ENCODE measurements at regions of chr9 and their contacts with region 1.

Region 1: DNA sequence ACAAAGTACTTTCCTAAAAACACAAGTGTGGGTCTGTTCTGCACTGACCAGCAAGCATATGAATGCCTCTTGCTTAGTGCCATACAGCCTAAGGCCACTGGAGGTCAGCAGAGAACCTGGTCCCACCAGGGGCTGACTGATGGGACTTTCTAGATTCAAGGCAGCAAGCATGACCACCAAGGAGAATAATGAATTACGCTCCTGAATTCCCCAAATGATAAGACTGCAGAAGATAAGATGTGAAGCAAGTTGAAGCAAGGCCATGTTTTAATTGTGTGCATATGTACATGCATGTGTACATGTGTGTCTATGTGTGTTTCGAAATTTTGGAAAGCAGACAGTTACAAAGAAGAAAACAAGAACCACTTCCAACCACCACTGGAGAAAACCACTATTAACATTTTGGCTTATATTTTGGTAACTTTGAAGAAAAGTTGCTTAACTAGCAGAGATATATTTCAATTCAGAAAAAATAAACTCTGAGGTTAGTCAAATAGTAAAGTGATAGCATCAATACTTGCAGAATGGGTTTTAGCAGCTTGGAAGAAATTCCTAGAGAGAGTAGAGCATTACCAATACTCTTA is 70.5 kb downstream of the ERP44 start:
- DNase-seq: peak; percentile 0
- H3K4me3 ChIP-seq: no peak overlapping the region
- H3K27ac ChIP-seq: no peak overlapping the region
- H3K4me1 ChIP-seq: no peaks in the 10 kb centered on the region
- H3K27me3 ChIP-seq: no peaks in the 10 kb centered on the region
- CTCF ChIP-seq: peak; percentile 50 to 87 (median 78)
- POLR2A ChIP-seq: no peak

Region 2: DNA sequence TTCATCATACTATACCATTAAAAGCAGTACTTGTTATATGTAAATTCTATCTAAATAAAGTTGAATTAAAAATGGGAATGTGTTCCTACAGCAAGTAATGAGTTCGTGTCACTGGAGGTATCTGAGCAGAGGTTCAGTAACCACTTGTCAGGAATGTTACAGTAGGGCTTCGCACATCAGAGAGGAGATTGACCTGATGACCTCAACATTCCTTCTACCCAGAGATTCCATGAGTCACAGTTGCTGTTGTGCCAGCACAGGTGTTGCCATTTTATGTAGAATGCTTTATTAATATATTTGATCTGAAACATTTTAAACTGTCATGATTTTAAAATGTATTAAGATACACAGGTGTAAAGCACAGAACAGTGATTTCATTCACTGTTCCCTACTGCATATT is 61.6 kb before region 1 on chr9:
- intact Hi-C with region 1: no loop called
- DNase-seq: no peak
- H3K4me3 ChIP-seq: no peak overlapping the region
- H3K27ac ChIP-seq: no peak overlapping the region
- H3K4me1 ChIP-seq: no peaks in the 10 kb centered on the region
- H3K27me3 ChIP-seq: no peaks in the 10 kb centered on the region
- CTCF ChIP-seq: no peak
- POLR2A ChIP-seq: no peak

Region 3: DNA sequence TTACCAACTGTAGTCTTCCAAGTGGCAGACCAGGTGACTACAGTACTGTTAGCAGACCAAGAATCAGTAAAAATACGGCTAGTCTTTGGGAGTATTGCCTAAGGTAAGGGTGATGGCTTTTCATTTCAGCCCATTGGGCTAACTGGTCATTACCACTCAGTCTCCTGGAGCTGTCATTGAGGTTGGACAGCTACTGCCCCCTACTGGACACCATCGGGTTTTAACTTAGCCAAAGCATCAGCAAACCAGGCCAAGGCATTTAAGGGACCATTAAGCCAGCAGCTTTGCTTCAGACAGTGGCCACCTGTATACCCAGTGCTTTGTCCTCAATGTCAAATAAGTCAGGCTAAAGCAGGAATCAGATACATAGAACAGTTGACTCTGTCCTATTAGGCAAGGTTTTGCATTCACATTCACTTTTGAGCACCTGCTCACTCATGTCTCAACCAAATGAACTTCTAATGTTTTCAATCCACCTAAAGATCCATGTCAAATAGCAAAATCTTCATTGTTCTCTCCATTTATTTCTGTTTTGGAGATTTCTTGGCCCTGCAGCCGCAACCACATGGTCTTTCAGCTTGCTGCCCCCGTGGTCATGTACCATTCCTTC is 188.0 kb after region 1 on chr9:
- intact Hi-C with region 1: loop called (anchors 5 kb)
- DNase-seq: no peak
- H3K4me3 ChIP-seq: no peak overlapping the region
- H3K27ac ChIP-seq: no peak overlapping the region
- H3K4me1 ChIP-seq: no peaks in the 10 kb centered on the region
- H3K27me3 ChIP-seq: no peaks in the 10 kb centered on the region
- CTCF ChIP-seq: peak; percentile 24 to 72 (median 56)
- POLR2A ChIP-seq: no peak